ENCODE measurements at regions of chr2 and their contacts with region 1.

Region 1: DNA sequence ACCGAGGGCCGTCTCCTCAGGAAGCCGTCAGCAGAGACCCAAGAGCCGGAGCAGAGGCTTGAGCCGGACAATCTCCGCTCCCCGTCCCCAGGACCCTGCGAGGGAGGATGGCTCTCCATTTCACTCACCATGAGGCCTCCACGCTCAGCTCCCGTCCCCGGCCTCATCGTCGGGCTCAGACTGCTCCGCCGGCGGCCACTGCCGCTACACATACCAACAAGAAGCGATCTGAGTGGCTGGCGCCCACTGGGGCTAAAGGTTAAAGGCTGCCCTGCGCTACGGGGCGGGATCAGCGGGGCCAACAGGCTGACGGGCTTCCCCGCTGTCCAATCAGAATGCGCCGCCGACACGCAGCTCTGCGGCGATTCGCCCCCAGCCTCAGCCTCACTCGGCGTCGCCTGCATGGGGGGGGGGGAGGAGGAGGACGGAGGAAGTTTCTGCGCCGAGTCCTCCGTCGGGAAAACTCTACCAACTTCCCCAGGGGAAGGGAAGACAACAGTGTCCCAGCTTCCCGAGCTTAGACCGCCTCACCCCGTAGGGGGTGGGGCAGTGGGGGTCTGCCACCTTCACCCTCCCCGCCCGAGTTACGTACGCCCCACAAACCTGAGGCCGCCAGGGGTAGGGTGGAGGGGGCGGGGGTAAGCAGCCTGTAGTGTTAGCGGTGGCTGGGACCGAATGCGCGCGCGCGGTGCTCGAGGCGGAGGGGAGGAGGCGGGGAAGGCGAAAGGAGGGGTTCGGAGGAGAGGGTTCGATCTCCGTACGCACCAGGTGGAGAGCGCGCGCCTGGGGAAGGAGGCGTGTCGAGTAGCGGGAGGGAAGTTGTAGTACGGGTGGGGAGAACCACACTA is at the start of gene PRPF40A:
- DNase-seq: peak; percentile 99 to 100
- ATAC-seq: peak; percentile 91 to 94 (median 92)
- H3K4me3 ChIP-seq: peak within 1 kb of the TSS; percentile 79
- H3K27ac ChIP-seq: peak within 1 kb of the TSS; percentile 97
- H3K4me1 ChIP-seq: peaks cover 49% of the 10 kb centered on the region
- H3K27me3 ChIP-seq: no peaks in the 10 kb centered on the region
- CTCF ChIP-seq: no peak
- total RNA-seq, gene PRPF40A: 38.7 to 53.7 (median 45.8) TPM

Region 2: DNA sequence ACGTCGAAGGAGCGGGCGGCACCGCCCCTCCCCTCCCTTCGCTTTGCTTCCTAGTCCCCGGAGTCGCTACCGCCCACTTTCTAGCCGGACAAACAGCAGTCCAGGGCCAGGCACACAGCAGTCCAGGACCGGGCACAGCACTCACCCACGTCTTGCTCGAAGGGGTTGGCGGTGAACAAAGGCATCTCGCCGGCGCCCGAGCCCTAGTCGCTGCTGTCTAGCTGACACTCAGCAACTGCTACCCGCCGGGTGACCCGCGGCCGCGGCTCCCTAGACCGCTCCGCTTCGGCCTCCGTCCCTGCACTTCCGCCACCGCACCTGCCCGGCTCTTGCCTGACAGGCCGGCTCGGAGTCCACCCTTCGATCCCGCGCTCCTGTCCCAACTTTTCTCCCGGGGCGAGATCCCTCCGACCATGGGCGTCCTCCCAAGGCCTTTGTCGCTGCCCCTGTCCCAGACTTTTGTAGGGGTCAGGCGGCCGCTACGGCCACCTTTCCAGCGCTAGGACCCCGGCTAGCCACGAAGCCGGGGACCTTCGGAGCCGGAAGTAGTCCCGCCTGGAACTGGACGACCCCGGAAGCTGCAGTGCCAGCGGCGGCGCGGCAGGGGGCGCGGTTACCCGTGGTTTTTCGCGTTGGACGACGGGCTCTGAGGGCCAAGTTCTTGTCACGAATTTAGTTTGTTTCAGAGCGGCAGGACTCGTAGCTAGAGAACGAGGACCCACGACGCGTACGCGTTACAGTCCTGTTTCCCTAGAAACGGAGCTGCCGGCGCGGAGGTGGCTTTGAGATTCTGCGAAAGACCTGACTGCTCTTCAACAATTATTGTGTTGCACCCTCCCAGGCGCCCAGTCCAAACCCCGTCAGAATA is 541.8 kb before region 1 on chr2 and contains the start of gene STAM2:
- intact Hi-C with region 1: loop called (anchors 2 to 5 kb)
- DNase-seq: peak; percentile 93 to 97
- ATAC-seq: peak; percentile 94 to 95 (median 94)
- H3K4me3 ChIP-seq: peak within 1 kb of the TSS; percentile 75
- H3K27ac ChIP-seq: peak within 1 kb of the TSS; percentile 94
- H3K4me1 ChIP-seq: peaks cover 29% of the 10 kb centered on the region
- H3K27me3 ChIP-seq: no peaks in the 10 kb centered on the region
- CTCF ChIP-seq: peak; percentile 96
- total RNA-seq, gene STAM2: 15.5 to 21.1 (median 18.0) TPM

Region 3: DNA sequence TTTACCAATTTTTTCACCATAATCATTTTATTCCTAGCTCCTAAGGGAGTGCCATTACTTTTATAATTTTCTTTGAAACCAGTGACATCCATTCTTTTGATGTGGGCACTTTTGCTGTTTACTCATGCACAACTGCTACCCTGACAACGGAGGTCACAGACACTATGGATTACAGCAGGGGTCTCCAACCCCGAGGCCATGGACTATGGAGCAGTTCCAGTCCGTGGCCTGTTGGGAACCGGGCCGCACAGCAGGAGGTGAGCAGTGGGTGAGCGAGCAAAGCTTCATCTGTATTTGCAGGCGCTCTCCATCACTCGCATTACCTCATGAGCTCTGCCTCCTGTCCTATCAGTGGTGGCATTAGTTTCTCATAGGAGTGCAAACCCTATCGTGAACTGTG is 34.8 kb before region 1 on chr2:
- intact Hi-C with region 1: loop called in 1 of 2 experiments (anchors 5 kb)
- DNase-seq: no peak
- ATAC-seq: peak in 1 of 4 donors; percentile 19
- H3K4me3 ChIP-seq: no peak overlapping the region
- H3K27ac ChIP-seq: no peak overlapping the region
- H3K4me1 ChIP-seq: no peaks in the 10 kb centered on the region
- H3K27me3 ChIP-seq: no peaks in the 10 kb centered on the region
- CTCF ChIP-seq: no peak

Region 4: GRCh38 chr2:152846697-152847470 is 129.4 kb after region 1 on chr2:
- intact Hi-C with region 1: no loop called
- DNase-seq: no peak
- ATAC-seq: no peak
- H3K4me3 ChIP-seq: no peak overlapping the region
- H3K27ac ChIP-seq: no peak overlapping the region
- H3K4me1 ChIP-seq: no peaks in the 10 kb centered on the region
- H3K27me3 ChIP-seq: peaks cover 0 to 2% (median 0%) of the 10 kb centered on the region in 3 donors
- CTCF ChIP-seq: no peak

Measured in psoas muscle (tissue), 8 donors.